ENCODE measurements at regions of chr9 and their contacts with region 1.

Region 1: GRCh38 chr9:78230761-78231160 is 5.1 kb upstream of the CEP78 start:
- DNase-seq: no peak
- H3K4me3 Mint-ChIP-seq: no peak overlapping the region
- H3K27ac Mint-ChIP-seq: no peak overlapping the region
- H3K4me1 Mint-ChIP-seq: peaks cover 12% of the 10 kb centered on the region
- H3K27me3 Mint-ChIP-seq: peaks cover 2% of the 10 kb centered on the region

Region 2: GRCh38 chr9:78171651-78172050 is 59.1 kb before region 1 on chr9:
- CTCF ChIA-PET with region 1: no interaction called
- POLR2A ChIA-PET with region 1: interaction called, 10 read pairs
- DNase-seq: no peak
- H3K4me3 Mint-ChIP-seq: no peak overlapping the region
- H3K27ac Mint-ChIP-seq: no peak overlapping the region
- H3K4me1 Mint-ChIP-seq: no peaks in the 10 kb centered on the region
- H3K27me3 Mint-ChIP-seq: peaks cover 13% of the 10 kb centered on the region

Region 3: DNA sequence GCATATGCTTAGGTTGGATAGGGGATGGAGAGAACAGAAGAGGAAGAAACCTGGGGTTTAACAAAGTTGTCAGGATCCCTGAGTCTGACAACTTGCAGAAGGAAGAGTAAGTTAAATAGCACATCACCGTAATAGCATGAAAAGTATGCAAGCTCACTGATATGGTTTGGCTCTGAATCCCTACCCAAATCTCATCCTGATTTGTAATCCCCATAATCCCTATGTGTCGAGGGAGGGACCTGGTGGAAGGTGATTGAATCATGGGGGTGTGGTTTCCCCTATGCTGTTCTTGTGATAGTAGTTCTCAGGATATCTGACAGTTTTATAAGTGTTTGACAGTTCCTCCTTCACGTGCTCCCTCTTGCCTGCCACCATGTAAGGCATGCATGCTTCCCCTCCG is 259.5 kb after region 1 on chr9:
- CTCF ChIA-PET with region 1: no interaction called
- POLR2A ChIA-PET with region 1: no interaction called
- DNase-seq: no peak
- H3K4me3 Mint-ChIP-seq: no peak overlapping the region
- H3K27ac Mint-ChIP-seq: no peak overlapping the region
- H3K4me1 Mint-ChIP-seq: no peaks in the 10 kb centered on the region
- H3K27me3 Mint-ChIP-seq: no peaks in the 10 kb centered on the region